ENCODE measurements at regions of chr6 and their contacts with region 1.

Region 1: GRCh38 chr6:21593412-21593926 is at the start of gene SOX4:
- H3K4me3 ChIP-seq: peak within 1 kb of the TSS; percentile 55
- H3K27ac ChIP-seq: peak within 1 kb of the TSS; percentile 99
- H3K4me1 ChIP-seq: peaks cover 12% of the 10 kb centered on the region
- CTCF ChIP-seq: no peak

Region 2: GRCh38 chr6:20811109-20811746 is 782.2 kb before region 1 on chr6:
- CTCF ChIA-PET with region 1: no interaction called
- POLR2A ChIA-PET with region 1: interaction called, 11 read pairs
- H3K4me3 ChIP-seq: no peak overlapping the region
- H3K27ac ChIP-seq: peak overlapping the region; percentile 55
- H3K4me1 ChIP-seq: peaks cover 13% of the 10 kb centered on the region
- CTCF ChIP-seq: no peak

Region 3: GRCh38 chr6:21501021-21501354 is 92.5 kb before region 1 on chr6:
- CTCF ChIA-PET with region 1: no interaction called
- POLR2A ChIA-PET with region 1: interaction called, 17 read pairs
- H3K4me3 ChIP-seq: no peak overlapping the region
- H3K27ac ChIP-seq: peak overlapping the region; percentile 58; the same call in 1 of the 2 replicates
- H3K4me1 ChIP-seq: peaks cover 17% of the 10 kb centered on the region
- CTCF ChIP-seq: no peak

Region 4: DNA sequence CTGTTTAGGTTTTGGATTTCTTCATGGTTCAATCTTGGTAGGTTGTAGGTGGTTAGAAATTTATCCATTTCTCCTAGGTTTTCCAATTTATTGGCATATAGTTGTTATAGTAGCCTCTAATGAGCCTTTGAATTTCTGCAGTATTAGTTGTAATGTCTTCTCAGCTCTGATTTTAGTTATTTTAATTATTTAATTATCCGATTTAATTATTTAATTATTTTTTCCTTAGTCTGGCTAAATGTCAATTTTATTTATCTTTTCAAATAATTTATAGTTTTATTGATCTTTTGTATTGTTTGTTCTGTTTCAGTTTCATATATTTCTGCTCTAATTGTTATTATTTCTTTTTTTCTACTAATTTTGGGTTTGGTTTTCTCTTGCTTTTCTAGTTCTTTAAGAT is 28.0 kb before region 1 on chr6:
- CTCF ChIA-PET with region 1: no interaction called
- POLR2A ChIA-PET with region 1: no interaction called
- H3K4me3 ChIP-seq: no peak overlapping the region
- H3K27ac ChIP-seq: no peak overlapping the region
- H3K4me1 ChIP-seq: no peaks in the 10 kb centered on the region
- CTCF ChIP-seq: no peak

Region 5: DNA sequence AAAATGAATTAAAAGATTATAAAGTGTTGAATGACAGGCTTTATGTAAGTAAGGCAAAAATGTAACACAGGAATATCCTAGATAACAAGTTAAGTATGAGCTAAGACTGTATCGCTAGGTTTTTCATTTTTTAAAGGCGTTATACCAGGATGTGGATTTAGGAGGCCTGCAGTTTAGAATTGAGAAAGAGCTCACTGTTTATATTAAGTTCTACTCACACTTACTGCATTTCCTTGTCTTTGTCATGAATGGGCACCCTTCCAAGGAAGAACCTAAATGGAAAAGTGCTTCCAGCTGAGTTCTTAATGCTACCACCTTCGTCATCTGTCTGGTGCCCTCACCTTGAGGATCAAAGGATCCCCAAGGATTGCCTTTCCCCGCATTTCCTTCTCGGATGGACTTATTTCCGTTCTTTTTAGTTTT is 148.8 kb after region 1 on chr6:
- CTCF ChIA-PET with region 1: interaction called, 4 read pairs
- POLR2A ChIA-PET with region 1: interaction called, 141 read pairs
- H3K4me3 ChIP-seq: no peak overlapping the region
- H3K27ac ChIP-seq: peak overlapping the region; percentile 44; the same call in 1 of the 2 replicates
- H3K4me1 ChIP-seq: peaks cover 49% of the 10 kb centered on the region
- CTCF ChIP-seq: no peak

Region 6: DNA sequence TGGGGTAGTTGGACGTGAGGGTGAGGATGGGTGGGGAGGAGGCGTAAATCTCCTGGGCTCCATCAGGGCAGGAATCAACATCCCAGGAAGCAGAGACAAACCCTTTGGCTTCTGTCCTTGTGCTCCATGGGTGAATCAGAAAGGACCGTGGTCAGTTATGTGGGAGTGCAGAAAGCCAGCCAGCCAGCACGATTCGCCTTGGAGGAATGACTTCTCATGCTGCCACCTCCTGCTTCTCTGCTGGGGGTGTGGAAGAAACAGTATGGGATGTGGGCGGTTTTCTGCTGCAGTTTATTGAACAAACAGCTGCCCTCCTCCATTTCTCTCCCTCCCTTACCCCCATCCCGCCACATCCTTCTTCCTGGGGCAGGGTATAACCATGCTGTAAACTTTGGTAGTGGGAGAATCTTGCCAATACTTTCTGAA is 214.6 kb after region 1 on chr6:
- CTCF ChIA-PET with region 1: interaction called, 3 read pairs
- POLR2A ChIA-PET with region 1: interaction called, 10 read pairs
- H3K4me3 ChIP-seq: no peak overlapping the region
- H3K27ac ChIP-seq: peak overlapping the region; percentile 91
- H3K4me1 ChIP-seq: peaks cover 22% of the 10 kb centered on the region
- CTCF ChIP-seq: no peak

Region 7: GRCh38 chr6:21971541-21971940 is 378.1 kb after region 1 on chr6:
- CTCF ChIA-PET with region 1: interaction called, 5 read pairs
- POLR2A ChIA-PET with region 1: interaction called, 12 read pairs
- H3K4me3 ChIP-seq: no peak overlapping the region
- H3K27ac ChIP-seq: no peak overlapping the region
- H3K4me1 ChIP-seq: peaks cover 17% of the 10 kb centered on the region
- CTCF ChIP-seq: no peak